HepG2 (cell line): ENCODE measurements at regions of chr4 and their contacts with region 1.

Region 1: GRCh38 chr4:6892190-6892908 is 17.3 kb upstream of the TBC1D14 start:
- DNase-seq: peak; percentile 94
- ATAC-seq: peak; percentile 79
- H3K4me3 ChIP-seq: peak overlapping the region; percentile 38 to 69 (median 52); a peak in 5 of 6 replicates
- H3K27ac ChIP-seq: peak overlapping the region; percentile 99
- H3K4me1 ChIP-seq: peaks cover 57% of the 10 kb centered on the region
- H3K27me3 ChIP-seq: no peaks in the 10 kb centered on the region
- CTCF ChIP-seq: peak; percentile 91
- EP300 ChIP-seq: peak in 1 of 2 experiments; percentile 62; a peak in 2 of 4 replicates
- POLR2A ChIP-seq: peak; percentile 57 to 79; a peak in 2 of 4 replicates
- RAD21 ChIP-seq: peak; percentile 90

Region 2: DNA sequence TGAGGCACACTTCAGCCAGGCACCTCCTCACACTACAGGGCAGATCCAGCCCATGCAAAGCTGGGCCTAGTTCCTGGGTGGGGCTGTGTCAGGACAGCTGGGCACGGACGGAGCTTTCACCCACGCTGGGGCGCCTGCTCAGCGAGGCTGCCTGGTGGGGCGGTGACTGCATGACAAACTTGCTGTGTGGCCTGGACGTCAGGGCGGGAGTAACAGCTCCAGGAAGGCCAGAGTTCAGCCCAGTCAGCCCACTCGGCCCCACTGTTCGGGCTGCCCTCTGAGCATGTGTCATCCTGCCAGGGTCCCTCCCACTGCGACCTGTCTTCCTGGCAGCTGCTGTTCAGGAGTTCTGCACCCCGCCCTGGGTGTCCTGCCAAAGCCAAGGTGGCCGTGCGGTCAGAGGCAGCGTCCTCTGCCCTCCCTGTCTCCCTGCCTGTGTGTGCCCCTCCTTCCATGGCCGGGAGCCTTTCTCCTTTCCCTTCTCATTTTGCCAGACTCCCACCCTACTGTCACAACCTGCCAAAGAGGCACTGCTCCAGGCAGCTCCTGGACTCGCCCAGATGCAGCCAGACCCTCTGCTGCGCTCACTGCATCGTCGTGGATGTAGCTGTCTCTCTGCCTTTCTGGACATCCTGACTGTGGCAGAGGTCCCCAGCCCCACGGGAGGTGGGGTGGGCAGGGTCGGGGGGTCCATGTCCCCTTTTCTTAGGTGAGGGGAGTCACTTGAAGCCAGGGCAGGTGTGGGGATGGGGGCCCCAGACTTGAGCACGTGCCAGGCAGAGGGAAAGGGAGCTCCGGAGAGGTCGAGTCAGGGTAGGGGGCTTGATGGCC is 142.8 kb before region 1 on chr4:
- CTCF ChIA-PET with region 1: no interaction called
- POLR2A ChIA-PET with region 1: interaction called, 18 read pairs
- in situ Hi-C with region 1: no loop called
- intact Hi-C with region 1: no loop called
- DNase-seq: peak; percentile 91
- ATAC-seq: peak; percentile 88
- H3K4me3 ChIP-seq: peak overlapping the region; percentile 58 to 74 (median 63)
- H3K27ac ChIP-seq: peak overlapping the region; percentile 83
- H3K4me1 ChIP-seq: peaks cover 89% of the 10 kb centered on the region
- H3K27me3 ChIP-seq: no peaks in the 10 kb centered on the region; a peak in 1 of 5 replicates
- CTCF ChIP-seq: peak; percentile 38
- EP300 ChIP-seq: peak; percentile 32 to 61; a peak in 2 of 4 replicates
- POLR2A ChIP-seq: peak in 1 of 2 experiments; percentile 60; a peak in 1 of 4 replicates
- RAD21 ChIP-seq: peak; percentile 62

Region 3: GRCh38 chr4:6873792-6874461 is 18.4 kb before region 1 on chr4:
- CTCF ChIA-PET with region 1: no interaction called
- POLR2A ChIA-PET with region 1: interaction called, 13 read pairs
- in situ Hi-C with region 1: no loop called
- intact Hi-C with region 1: no loop called
- DNase-seq: peak; percentile 41
- ATAC-seq: peak; percentile 89
- H3K4me3 ChIP-seq: no peak overlapping the region
- H3K27ac ChIP-seq: no peak overlapping the region
- H3K4me1 ChIP-seq: no peaks in the 10 kb centered on the region
- H3K27me3 ChIP-seq: no peaks in the 10 kb centered on the region
- CTCF ChIP-seq: peak; percentile 89
- EP300 ChIP-seq: no peak
- POLR2A ChIP-seq: no peak
- RAD21 ChIP-seq: peak; percentile 83

Region 4: DNA sequence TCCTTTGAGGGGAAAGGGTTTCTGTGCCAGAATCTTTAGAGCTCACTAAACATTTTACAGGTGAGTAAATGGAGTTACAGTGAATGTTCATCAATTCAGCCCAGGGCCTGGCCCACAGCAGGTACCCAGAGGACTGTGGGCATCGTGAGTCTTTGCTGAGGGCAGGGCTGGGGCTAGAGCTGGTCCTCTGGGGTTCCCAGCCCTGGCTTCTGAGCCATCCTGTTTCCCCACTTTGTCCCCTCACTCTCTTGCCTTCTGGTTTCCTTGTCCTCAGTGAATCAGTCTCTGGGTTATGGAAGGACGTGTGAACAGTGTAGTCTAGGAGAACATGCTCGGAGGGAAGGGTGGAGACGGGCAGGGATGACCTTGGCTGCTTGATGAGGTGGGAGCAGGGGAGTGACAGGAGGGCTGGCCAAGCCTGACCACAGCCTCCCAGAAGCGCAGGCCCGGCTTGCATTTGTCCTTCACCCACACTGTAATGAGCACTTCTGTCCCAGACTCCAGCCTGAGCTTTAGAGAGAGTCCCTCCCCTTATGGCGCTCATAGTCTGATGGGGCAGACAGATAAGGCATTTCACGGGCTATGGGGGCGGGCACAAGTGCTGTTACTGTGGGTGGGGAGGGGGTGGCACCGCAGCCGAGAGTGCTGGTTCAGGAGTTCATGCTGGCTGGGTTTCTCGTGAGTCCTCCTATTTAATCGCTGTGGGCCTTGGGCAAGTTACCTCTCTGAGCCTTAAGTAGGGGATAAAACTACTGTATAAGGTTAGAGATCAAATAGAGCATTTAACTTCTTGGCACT is 34.5 kb after region 1 on chr4:
- CTCF ChIA-PET with region 1: no interaction called
- POLR2A ChIA-PET with region 1: interaction called, 22 read pairs
- in situ Hi-C with region 1: no loop called
- intact Hi-C with region 1: loop called (anchors 5 kb)
- DNase-seq: peak; percentile 96
- ATAC-seq: peak; percentile 93
- H3K4me3 ChIP-seq: peak overlapping the region; percentile 7 to 31 (median 11); a peak in 2 of 6 replicates
- H3K27ac ChIP-seq: peak overlapping the region; percentile 63
- H3K4me1 ChIP-seq: peaks cover 91% of the 10 kb centered on the region
- H3K27me3 ChIP-seq: no peaks in the 10 kb centered on the region
- CTCF ChIP-seq: no peak
- EP300 ChIP-seq: no peak
- POLR2A ChIP-seq: peak in 1 of 2 experiments; percentile 49; a peak in 1 of 4 replicates
- RAD21 ChIP-seq: no peak

Region 5: DNA sequence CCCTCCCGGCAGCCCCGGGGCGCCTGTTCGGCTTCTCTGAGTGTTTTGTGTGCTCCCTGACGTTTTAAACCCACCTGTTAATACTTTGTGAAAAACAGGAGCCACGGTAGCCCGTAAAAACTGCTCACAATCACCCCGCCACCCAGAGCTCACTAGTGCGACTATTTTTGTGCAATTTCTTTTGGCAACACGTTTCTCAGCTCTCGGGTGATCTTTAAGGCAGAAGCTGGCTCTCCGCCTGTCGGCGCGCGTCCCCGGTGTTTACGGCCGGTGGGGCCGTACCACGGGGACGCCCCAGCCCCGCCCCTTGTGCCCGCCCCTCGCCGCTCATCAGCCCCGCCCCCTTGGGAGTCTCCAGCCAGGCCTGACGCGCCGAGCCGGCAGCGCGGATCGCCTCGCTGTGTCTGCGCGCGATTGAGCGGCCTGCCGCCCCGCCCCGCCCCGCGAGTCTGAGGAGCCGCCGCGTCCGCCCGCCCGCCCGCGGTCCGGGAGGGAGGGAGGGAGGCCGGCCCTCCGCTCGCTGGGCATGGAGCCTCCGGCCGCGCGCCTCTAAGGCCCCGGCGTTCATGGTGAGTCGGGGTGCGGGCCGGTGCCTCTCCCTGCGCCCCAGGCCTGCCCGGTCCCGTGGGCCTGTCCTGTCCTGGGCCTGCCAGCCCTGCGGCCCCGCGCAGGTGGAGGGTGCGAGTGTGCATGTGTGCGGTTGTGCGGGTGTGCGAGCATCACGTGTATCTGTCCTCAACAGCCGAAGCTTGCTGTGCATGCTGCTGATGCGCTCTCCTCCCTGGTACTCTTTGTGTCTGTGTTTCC is 94.6 kb after region 1 on chr4:
- CTCF ChIA-PET with region 1: no interaction called
- POLR2A ChIA-PET with region 1: interaction called, 11 read pairs
- in situ Hi-C with region 1: no loop called
- intact Hi-C with region 1: loop called (anchors 2 kb)
- DNase-seq: peak; percentile 81
- ATAC-seq: peak; percentile 84
- H3K4me3 ChIP-seq: peak overlapping the region; percentile 82 to 92 (median 88)
- H3K27ac ChIP-seq: peak overlapping the region; percentile 80
- H3K4me1 ChIP-seq: peaks cover 53% of the 10 kb centered on the region
- H3K27me3 ChIP-seq: no peaks in the 10 kb centered on the region; a peak in 1 of 5 replicates
- CTCF ChIP-seq: peak; percentile 23; the same call in 1 of the 2 replicates
- EP300 ChIP-seq: no peak; a peak in 1 of 4 replicates
- POLR2A ChIP-seq: peak; percentile 48 to 62; a peak in 2 of 4 replicates
- RAD21 ChIP-seq: no peak

Region 6: DNA sequence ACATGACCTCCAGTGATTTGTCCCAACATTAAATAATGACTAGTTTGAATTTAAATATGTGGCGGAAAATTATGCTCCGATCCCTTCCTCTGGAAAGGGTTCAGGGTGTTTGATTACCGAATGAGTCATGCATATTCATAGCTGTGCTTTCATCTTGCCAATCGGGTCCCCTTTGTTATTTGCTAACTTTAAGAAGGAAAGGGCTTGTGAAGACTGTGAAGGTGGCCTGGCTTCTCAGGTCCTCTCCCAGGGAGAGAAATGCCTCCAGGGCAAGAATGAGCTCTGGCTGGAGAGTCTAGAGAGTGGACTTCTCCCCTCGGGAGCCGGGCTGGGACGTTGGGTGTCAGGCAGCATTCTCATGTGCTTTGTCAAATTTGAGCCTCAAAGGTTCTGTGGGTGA is 697.8 kb after region 1 on chr4:
- CTCF ChIA-PET with region 1: no interaction called
- POLR2A ChIA-PET with region 1: no interaction called
- in situ Hi-C with region 1: no loop called
- intact Hi-C with region 1: no loop called
- DNase-seq: no peak
- ATAC-seq: no peak
- H3K4me3 ChIP-seq: no peak overlapping the region
- H3K27ac ChIP-seq: no peak overlapping the region
- H3K4me1 ChIP-seq: no peaks in the 10 kb centered on the region
- H3K27me3 ChIP-seq: no peaks in the 10 kb centered on the region
- CTCF ChIP-seq: no peak
- EP300 ChIP-seq: no peak
- POLR2A ChIP-seq: no peak
- RAD21 ChIP-seq: no peak